GM23248 (cell line): ENCODE measurements at regions of chr3 and their contacts with region 1.

Region 1: DNA sequence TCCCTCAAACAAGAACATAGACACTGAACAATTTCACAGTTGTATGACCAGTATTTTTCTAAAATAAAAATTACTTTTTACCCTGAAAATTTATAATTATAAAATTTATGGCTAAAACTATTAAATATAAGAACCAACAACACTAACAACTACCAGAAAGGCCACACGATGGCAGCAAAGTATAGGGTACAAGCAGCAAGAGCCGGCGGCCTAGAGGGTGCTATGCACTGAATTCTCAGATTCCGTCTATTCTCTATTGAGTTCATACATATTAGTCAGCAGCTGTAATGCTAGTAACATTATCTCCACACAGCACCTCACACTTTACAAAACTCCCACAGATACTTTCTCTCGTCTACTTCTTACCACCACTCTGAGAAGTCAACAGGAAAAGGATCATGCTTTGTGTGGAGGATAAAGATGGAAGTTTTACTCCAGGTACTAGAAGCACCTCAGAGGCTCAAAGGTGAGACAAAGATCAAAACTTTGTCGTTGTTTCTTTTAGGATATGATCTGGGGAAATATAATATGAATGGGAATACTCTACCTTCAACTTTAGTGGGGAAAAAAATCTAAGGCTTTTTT is 160.5 kb downstream of the FGF12 start:
- DNase-seq: peak; percentile 91
- H3K4me3 ChIP-seq: no peak overlapping the region
- H3K27ac ChIP-seq: no peak overlapping the region
- H3K4me1 ChIP-seq: 0 out of 2 replicates have a peak, but pooled peaks cover 3% of the 10 kb centered on the region
- H3K27me3 ChIP-seq: no peaks in the 10 kb centered on the region

Region 2: DNA sequence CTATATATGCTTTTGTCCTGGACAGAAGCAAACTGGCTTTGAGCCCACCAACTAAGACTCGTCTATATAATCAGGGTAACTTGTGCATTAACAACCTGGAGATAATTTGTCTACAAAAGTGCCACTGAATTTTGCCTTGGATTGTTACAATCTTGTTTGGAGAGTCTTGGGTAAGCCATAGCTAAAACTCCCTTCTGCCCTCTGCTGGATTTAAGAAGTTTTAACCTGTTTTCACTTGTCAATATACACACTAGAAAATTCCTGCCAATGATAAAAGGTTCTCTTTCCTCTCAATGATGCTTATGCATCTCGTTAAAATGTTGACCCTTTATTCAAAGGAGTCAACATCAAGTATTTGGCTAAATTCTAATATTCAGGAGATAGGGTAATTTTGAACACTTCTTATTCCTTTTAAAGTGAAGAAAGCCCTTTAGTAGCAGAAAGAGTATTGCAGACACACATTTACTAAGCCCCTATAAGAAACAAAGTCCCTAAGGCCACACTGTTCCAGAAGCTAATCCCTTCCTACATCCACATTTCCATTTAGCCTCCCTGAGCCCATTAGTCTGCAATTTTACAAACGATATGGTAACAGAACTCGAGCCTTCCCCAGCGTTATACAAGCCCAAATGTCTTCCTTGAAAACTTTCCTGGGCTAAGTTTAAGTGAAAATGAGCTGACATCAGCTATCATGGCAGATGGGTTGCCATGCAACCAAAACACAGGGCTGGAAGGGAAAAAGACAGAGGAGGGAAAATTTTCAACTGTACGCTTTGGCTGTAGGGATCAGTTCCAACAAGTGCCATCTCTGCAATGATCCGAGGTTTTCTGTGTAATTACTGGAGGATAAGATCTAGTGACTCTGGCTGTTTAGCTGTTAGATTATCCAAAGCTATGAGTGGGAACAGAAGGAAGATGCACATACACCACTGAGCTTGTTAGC is 236.4 kb after region 1 on chr3:
- in situ Hi-C with region 1: loop called (anchors 10 kb)
- DNase-seq: peak; percentile 69
- H3K4me3 ChIP-seq: no peak overlapping the region
- H3K27ac ChIP-seq: no peak overlapping the region
- H3K4me1 ChIP-seq: no peaks in the 10 kb centered on the region
- H3K27me3 ChIP-seq: no peaks in the 10 kb centered on the region

Region 3: DNA sequence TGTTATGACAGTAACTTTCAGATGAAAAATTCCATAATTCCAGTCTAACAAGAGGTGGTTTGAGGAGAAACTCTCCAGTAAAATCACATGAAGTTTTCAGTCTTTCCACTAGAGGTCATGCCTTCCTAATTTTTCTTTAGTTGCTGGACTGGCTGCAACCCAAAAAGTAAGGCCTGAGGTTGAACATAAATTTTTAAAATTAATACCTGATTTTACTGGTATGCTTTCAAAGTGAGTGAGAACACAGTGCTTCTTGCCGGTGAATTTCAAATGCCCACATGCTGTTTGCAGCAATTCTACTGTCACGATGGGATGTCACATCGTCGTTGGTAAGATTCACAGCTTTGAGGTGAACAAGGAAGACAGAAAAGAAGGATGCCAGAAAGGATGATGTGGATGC is 249.6 kb after region 1 on chr3:
- in situ Hi-C with region 1: no loop called
- DNase-seq: peak; percentile 77
- H3K4me3 ChIP-seq: no peak overlapping the region
- H3K27ac ChIP-seq: peak overlapping the region; percentile 25; the same call in 1 of the 2 replicates
- H3K4me1 ChIP-seq: peaks cover 37% of the 10 kb centered on the region
- H3K27me3 ChIP-seq: no peaks in the 10 kb centered on the region

Region 4: GRCh38 chr3:193052354-193053045 is 485.7 kb after region 1 on chr3:
- in situ Hi-C with region 1: loop called (anchors 25 kb)
- DNase-seq: no peak
- H3K4me3 ChIP-seq: no peak overlapping the region
- H3K27ac ChIP-seq: no peak overlapping the region
- H3K4me1 ChIP-seq: no peaks in the 10 kb centered on the region
- H3K27me3 ChIP-seq: peaks cover 6% of the 10 kb centered on the region; the same call in 1 of the 2 replicates

Region 5: DNA sequence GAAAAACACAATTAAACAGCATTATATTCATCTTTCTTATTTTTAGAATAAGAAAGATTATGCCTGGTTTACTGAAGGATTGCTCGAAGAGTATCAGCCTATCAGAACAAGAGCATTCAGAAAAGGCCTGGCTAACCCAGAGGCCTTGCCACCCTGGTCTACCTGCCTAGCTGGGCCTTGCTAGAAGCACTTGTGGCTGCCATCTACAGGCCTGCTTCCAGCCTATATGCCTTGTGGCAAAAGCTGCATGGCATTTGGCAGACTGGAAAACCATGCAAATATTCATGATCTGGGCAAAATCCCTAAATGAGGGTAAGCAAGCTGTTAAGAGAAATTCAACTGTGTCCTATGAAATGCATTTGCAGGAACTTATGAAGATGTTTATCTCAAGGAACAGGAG is 997.2 kb after region 1 on chr3:
- in situ Hi-C with region 1: loop called (anchors 10 kb)
- DNase-seq: peak; percentile 7
- H3K4me3 ChIP-seq: no peak overlapping the region
- H3K27ac ChIP-seq: no peak overlapping the region
- H3K4me1 ChIP-seq: no peaks in the 10 kb centered on the region
- H3K27me3 ChIP-seq: peaks cover 4% of the 10 kb centered on the region; the same call in 1 of the 2 replicates